Mammary epithelial cell (primary cell): ENCODE measurements at regions of chr6 and their contacts with region 1.

Region 1: GRCh38 chr6:128295670-128296069 is 224.7 kb downstream of the PTPRK start:
- DNase-seq: no peak
- H3K4me3 ChIP-seq: no peak overlapping the region
- H3K27ac ChIP-seq: no peak overlapping the region
- H3K4me1 ChIP-seq: no peaks in the 10 kb centered on the region
- H3K27me3 ChIP-seq: no peaks in the 10 kb centered on the region
- CTCF ChIP-seq: peak; percentile 22 to 39

Region 2: GRCh38 chr6:127786109-127786508 is 509.6 kb before region 1 on chr6:
- CTCF ChIA-PET with region 1: no interaction called
- dilution Hi-C with region 1: no loop called
- in situ Hi-C with region 1: no loop called
- intact Hi-C with region 1: no loop called
- DNase-seq: no peak
- H3K4me3 ChIP-seq: no peak overlapping the region
- H3K27ac ChIP-seq: no peak overlapping the region
- H3K4me1 ChIP-seq: no peaks in the 10 kb centered on the region
- H3K27me3 ChIP-seq: peaks cover 1% of the 10 kb centered on the region
- CTCF ChIP-seq: no peak

Region 3: DNA sequence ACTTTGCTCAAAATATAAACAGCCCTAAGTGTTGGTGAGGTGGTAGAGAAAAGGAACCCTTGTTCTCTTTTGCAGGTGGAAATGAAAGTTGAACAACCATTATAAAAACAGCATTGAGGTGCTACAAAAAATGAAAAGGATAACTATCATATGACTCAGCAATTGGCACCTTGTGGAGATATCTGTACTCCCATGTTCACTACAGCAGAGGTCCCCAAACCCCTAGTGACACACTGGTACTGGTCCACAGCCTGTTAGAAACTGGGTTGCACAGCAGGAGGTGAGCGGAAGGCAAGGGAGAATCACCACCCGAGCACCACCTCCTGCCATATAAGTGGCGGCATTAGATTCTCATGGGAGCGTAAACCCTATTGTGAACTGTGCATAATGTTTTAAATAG is 127.4 kb before region 1 on chr6:
- CTCF ChIA-PET with region 1: no interaction called
- dilution Hi-C with region 1: no loop called
- in situ Hi-C with region 1: no loop called
- intact Hi-C with region 1: loop called (anchors 5 kb)
- DNase-seq: no peak
- H3K4me3 ChIP-seq: no peak overlapping the region
- H3K27ac ChIP-seq: no peak overlapping the region
- H3K4me1 ChIP-seq: peaks cover 13% of the 10 kb centered on the region
- H3K27me3 ChIP-seq: no peaks in the 10 kb centered on the region
- CTCF ChIP-seq: no peak

Region 4: GRCh38 chr6:128358244-128358776 is 62.6 kb after region 1 on chr6:
- CTCF ChIA-PET with region 1: no interaction called
- dilution Hi-C with region 1: no loop called
- in situ Hi-C with region 1: no loop called
- intact Hi-C with region 1: no loop called
- DNase-seq: peak; percentile 8
- H3K4me3 ChIP-seq: no peak overlapping the region
- H3K27ac ChIP-seq: no peak overlapping the region
- H3K4me1 ChIP-seq: no peaks in the 10 kb centered on the region
- H3K27me3 ChIP-seq: no peaks in the 10 kb centered on the region
- CTCF ChIP-seq: no peak